B cell (primary cell): ENCODE measurements at regions of chr19 and their contacts with region 1.

Region 1: GRCh38 chr19:21328885-21329605 is at the start of gene ZNF708:
- DNase-seq: peak; percentile 88
- ATAC-seq: peak; percentile 99
- H3K4me3 ChIP-seq: peak within 1 kb of the TSS; percentile 85 to 100 (median 96)
- H3K4me3 Mint-ChIP-seq: peak within 1 kb of the TSS; percentile 99
- H3K27ac ChIP-seq: peak within 1 kb of the TSS; percentile 97 to 99
- H3K27ac Mint-ChIP-seq: peak within 1 kb of the TSS; percentile 99
- H3K4me1 ChIP-seq: peaks cover 9 to 16% of the 10 kb centered on the region in 2 donors
- H3K4me1 Mint-ChIP-seq: peaks cover 39% of the 10 kb centered on the region
- H3K27me3 ChIP-seq: no peaks in the 10 kb centered on the region
- H3K27me3 Mint-ChIP-seq: no peaks in the 10 kb centered on the region
- CTCF ChIP-seq: no peak
- total RNA-seq, gene ZNF708: 37.7 and 38.2 TPM in 2 replicates

Region 2: GRCh38 chr19:20565321-20566018 is 763.6 kb before region 1 on chr19 and contains the start of gene ZNF737:
- CTCF ChIA-PET with region 1: no interaction called
- POLR2A ChIA-PET with region 1: interaction called, 3 read pairs
- intact Hi-C with region 1: loop called (anchors 5 kb)
- DNase-seq: peak; percentile 93
- ATAC-seq: peak; percentile 92
- H3K4me3 ChIP-seq: peak within 1 kb of the TSS; percentile 38 to 87 (median 80)
- H3K4me3 Mint-ChIP-seq: peak within 1 kb of the TSS; percentile 98
- H3K27ac ChIP-seq: peak within 1 kb of the TSS; percentile 93 to 96
- H3K27ac Mint-ChIP-seq: peak within 1 kb of the TSS; percentile 99
- H3K4me1 ChIP-seq: peaks cover 6 to 15% of the 10 kb centered on the region in 2 donors
- H3K4me1 Mint-ChIP-seq: peaks cover 32% of the 10 kb centered on the region
- H3K27me3 ChIP-seq: no peaks in the 10 kb centered on the region
- H3K27me3 Mint-ChIP-seq: no peaks in the 10 kb centered on the region
- CTCF ChIP-seq: no peak
- total RNA-seq, gene ZNF737: 45.6 and 50.1 TPM in 2 replicates

Region 3: DNA sequence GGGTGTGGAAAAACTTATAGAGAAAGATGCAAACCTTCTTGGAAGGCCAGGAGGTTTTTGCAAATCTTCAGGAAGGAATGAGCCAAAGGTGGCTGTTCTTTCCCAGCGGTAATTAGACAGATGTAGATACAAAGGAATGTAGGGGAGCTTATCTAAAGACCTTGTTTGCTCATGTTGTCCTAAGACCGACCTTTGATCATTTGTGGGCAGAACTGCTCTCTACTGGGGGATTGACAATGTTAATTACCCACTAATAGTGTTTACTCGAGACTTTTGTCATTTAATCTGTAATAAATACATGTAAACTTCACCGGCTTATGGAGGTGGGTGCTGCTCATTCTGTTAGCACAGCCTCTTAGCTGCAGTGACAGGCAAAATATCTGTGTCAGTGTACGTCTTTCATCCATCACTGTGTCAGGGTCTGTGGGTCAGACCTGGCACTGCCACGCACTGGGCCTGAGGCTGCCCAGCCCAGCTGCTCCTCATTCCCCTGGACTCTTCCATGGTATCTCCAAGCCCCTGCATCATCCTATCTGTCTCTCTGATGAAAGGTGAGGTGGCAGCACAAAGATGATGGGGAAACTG is 118.9 kb before region 1 on chr19:
- CTCF ChIA-PET with region 1: no interaction called
- POLR2A ChIA-PET with region 1: no interaction called
- intact Hi-C with region 1: no loop called
- DNase-seq: no peak
- ATAC-seq: no peak
- H3K4me3 ChIP-seq: no peak overlapping the region
- H3K4me3 Mint-ChIP-seq: no peak overlapping the region
- H3K27ac ChIP-seq: no peak overlapping the region
- H3K27ac Mint-ChIP-seq: no peak overlapping the region
- H3K4me1 ChIP-seq: no peaks in the 10 kb centered on the region
- H3K4me1 Mint-ChIP-seq: no peaks in the 10 kb centered on the region
- H3K27me3 ChIP-seq: no peaks in the 10 kb centered on the region
- H3K27me3 Mint-ChIP-seq: peaks cover 3% of the 10 kb centered on the region
- CTCF ChIP-seq: no peak

Region 4: DNA sequence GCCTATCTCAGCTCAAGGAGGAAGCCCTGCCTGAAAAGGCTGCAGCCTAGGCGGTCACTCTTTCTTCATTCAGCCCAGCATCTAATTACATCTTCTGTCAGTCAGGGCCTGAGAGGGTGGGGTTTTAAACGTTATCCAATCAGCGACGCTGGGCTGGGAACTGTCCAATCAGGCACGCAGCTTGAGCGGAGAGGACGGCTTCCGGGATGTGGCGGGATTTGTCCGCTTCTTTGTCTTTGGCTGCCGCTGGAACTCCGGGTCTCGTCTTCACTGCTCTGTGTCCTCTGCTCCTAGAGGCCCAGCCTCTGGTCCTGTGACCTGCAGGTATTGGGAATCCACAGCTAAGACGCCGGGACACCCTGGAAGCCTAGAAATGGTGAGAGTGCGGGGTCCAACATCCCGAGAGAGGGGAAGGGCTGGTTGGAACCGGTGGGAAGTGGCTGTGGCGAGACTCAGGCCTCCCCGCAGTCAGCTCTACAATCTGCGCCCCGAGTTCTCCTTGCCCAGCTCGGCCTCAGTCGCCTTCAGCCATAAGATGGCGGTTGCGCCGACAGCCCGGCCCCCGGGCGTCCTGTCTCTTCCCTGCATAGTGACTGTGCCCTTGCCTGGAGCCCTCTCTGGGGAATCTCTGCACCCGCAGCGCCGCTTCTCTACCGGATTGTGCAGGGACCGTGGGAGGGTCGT is 29.9 kb after region 1 on chr19 and contains the start of gene ZNF738:
- CTCF ChIA-PET with region 1: interaction called, 7 read pairs
- POLR2A ChIA-PET with region 1: interaction called, 10 read pairs
- intact Hi-C with region 1: loop called (anchors 1 kb)
- DNase-seq: peak; percentile 89
- ATAC-seq: peak; percentile 97
- H3K4me3 ChIP-seq: peak within 1 kb of the TSS; percentile 70 to 96 (median 88)
- H3K4me3 Mint-ChIP-seq: peak within 1 kb of the TSS; percentile 99
- H3K27ac ChIP-seq: peak within 1 kb of the TSS; percentile 80 to 86
- H3K27ac Mint-ChIP-seq: peak within 1 kb of the TSS; percentile 96
- H3K4me1 ChIP-seq: peaks cover 0 to 4% of the 10 kb centered on the region in 2 donors
- H3K4me1 Mint-ChIP-seq: peaks cover 13% of the 10 kb centered on the region
- H3K27me3 ChIP-seq: no peaks in the 10 kb centered on the region
- H3K27me3 Mint-ChIP-seq: no peaks in the 10 kb centered on the region
- CTCF ChIP-seq: no peak
- total RNA-seq, gene ZNF738: 26.8 and 27.1 TPM in 2 replicates